Gastrocnemius medialis (tissue), 4 donors: ENCODE measurements at regions of chr17 and their contacts with region 1.

Region 1: DNA sequence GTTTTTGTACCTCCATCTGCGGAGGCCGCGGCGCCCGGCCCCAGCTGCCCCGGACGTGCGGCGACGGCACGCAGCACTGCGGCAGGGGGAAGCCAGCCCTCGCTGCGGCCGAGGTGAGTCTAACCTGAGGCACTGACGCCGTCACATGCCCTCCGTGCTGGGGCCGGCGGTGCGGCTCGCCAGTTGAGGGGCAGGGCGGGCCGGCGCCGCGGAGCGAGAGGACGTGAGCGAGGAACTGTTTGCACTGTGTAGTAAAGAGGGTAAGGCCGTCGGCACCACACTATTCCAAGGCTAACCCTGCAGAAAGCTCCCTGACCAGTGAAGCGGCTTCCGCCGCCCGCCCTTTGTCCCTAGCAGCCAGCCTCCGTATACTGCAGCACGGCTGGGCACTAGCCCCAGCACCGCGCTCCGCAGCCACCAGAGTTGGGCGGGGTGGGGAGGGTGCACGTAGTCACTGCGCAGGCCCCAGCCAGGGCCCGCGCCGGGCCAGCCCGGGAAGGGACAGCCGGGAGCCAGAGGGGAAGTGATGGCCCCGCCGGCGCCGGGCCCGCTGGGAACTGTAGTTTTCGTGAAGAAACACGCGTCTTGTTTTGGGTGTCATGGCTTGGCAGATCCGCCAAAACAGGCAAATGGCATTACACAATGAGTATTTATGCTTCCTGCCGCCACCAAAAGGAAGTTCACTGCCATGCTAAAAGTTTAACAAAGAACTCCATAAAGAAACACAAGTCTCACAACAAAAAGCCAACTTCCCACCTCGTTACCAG is 580 bp upstream of the KANSL1 start:
- DNase-seq: peak; percentile 96 to 98
- ATAC-seq: peak; percentile 74 to 75
- H3K4me3 ChIP-seq: peak overlapping the region; percentile 80 to 97 (median 94)
- H3K27ac ChIP-seq: peak overlapping the region; percentile 91 to 99 (median 98)
- H3K4me1 ChIP-seq: peaks cover 38 to 39% of the 10 kb centered on the region in 2 donors
- H3K27me3 ChIP-seq: no peaks in the 10 kb centered on the region
- CTCF ChIP-seq: peak; percentile 25 to 91 (median 60)
- POLR2A ChIP-seq: peak; percentile 85 to 93

Region 2: DNA sequence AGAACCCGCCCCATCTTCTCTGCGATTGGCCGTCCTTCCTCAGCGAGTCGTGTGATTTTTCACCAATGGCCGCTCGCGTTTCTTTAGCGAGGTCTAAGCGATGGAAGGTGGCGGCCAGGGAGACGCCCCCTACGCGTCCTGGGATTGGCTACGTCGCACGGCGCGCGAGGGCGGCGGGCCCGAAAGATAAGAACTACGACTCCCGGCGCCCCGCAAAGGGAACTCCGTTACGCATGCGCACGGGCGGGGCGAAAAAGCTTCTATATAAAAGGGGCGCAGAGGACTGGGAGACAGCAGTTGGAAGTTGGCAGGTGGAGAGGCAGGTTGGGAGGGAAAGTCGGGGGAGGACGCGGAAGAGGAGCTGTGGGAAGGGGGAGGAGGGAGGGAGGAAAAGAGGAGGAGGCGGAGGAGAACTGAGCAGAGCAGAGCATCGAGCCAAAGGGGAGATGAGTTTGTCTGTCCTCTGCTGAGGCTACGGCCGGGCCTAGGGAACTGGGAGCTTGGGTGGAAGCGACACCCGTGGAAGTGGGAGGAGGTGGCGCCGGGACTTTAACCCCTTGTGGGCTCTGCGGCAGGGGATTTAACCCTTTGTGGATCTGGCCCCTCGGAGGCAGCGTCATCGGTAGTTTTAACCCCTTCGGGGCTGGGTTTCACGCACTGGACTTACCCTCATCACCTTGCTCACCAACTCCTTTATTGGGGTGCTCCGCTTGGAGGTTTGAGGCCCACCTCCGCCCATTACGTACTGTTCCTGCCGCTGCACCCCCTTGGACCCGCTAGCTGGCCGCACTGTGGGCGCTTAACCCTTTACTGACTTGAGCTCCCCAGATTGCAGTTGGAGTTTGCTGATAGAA is 1045.4 kb before region 1 on chr17 and contains the start of gene HEXIM1:
- in situ Hi-C with region 1: no loop called
- intact Hi-C with region 1: loop called (anchors 5 kb)
- DNase-seq: peak; percentile 99 to 100
- ATAC-seq: peak; percentile 70
- H3K4me3 ChIP-seq: peak within 1 kb of the TSS; percentile 80 to 88 (median 84)
- H3K27ac ChIP-seq: peak within 1 kb of the TSS; percentile 90 to 98 (median 98)
- H3K4me1 ChIP-seq: peaks cover 36 to 50% of the 10 kb centered on the region in 2 donors
- H3K27me3 ChIP-seq: no peaks in the 10 kb centered on the region
- CTCF ChIP-seq: peak in 1 of 5 experiments; percentile 5
- POLR2A ChIP-seq: peak; percentile 99 to 100
- total RNA-seq, gene HEXIM1: 26.3 to 79.6 (median 36.9) TPM

Region 3: GRCh38 chr17:46002311-46002972 is 191.4 kb before region 1 on chr17:
- in situ Hi-C with region 1: no loop called
- intact Hi-C with region 1: loop called (anchors 5 kb)
- DNase-seq: peak; percentile 40 to 60
- ATAC-seq: peak; percentile 80 to 86
- H3K4me3 ChIP-seq: no peak overlapping the region
- H3K27ac ChIP-seq: peak overlapping the region in 3 of 4 donors; percentile 7 to 50 (median 8)
- H3K4me1 ChIP-seq: peaks cover 21 to 23% of the 10 kb centered on the region in 2 donors
- H3K27me3 ChIP-seq: no peaks in the 10 kb centered on the region
- CTCF ChIP-seq: peak; percentile 86 to 97 (median 96)
- POLR2A ChIP-seq: no peak

Region 4: DNA sequence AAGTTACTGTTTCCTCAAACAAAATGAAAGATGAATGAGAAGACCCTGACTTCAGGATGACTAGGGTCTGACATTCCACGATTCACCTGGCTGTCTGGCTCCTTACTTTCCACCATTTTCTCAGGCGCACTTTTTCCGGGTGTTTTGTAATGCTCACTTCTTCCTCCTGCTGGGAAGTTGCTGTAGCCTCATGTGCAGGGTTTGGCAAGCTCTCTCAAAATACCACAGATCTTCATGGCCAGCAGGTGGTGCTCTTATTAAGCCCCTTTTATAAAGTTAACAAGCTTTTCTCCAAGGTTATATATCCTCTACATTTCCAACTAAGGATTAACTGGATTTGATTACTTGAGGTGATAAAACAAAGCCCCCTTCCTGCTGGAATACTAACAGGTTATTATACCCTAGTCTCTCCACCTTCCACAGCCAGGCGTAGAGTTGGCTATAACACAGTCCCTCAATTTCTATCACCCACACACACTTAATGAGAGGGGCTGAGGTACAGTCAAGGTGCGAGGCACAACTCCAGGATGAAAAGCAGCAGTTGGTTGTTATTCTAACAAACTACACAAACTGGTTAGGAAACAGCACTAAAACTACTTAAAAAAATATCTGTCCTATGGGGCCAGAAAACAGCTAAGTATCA is 149.4 kb before region 1 on chr17:
- in situ Hi-C with region 1: loop called in 1 of 4 experiments (anchors 5 kb)
- intact Hi-C with region 1: loop called (anchors 1 kb)
- DNase-seq: peak; percentile 80 to 84
- ATAC-seq: peak; percentile 86 to 89
- H3K4me3 ChIP-seq: no peak overlapping the region
- H3K27ac ChIP-seq: peak overlapping the region; percentile 65 to 77 (median 75)
- H3K4me1 ChIP-seq: peaks cover 39 to 50% of the 10 kb centered on the region in 2 donors
- H3K27me3 ChIP-seq: no peaks in the 10 kb centered on the region
- CTCF ChIP-seq: peak; percentile 83 to 92 (median 89)
- POLR2A ChIP-seq: no peak

Region 5: DNA sequence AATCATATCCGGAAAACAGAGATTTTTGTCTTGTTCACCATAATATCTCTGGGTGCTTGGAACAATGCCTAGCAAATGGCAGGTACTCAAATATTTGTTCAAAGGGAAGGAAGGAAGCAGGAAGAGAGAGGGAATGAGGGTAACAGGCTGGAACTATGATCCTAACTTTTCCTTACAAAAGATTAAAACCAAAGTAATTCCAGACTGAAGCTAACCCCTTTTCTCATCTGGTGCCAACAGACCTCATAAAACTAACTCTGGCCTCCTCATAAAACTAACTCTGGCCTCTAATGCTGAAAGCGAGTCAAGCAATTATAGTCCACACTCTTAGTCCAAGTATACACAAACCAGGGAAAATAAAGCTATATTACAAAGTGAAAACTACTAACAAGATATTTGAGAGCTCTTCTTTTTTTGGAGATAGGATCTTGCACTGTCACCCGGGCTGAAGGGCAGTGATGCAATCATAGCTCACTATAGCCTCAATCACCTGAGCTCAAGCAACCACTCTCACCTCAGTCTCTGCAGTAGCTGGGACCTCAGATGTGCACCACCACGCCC is 85.2 kb before region 1 on chr17:
- in situ Hi-C with region 1: no loop called
- intact Hi-C with region 1: loop called (anchors 5 kb)
- DNase-seq: peak in 1 of 2 donors; percentile 54
- ATAC-seq: peak; percentile 78 to 89
- H3K4me3 ChIP-seq: no peak overlapping the region
- H3K27ac ChIP-seq: peak overlapping the region; percentile 56 to 76 (median 62)
- H3K4me1 ChIP-seq: peaks cover 59 to 65% of the 10 kb centered on the region in 2 donors
- H3K27me3 ChIP-seq: no peaks in the 10 kb centered on the region
- CTCF ChIP-seq: no peak
- POLR2A ChIP-seq: no peak

Region 6: GRCh38 chr17:46179375-46179999 is 14.3 kb before region 1 on chr17:
- in situ Hi-C with region 1: no loop called
- intact Hi-C with region 1: no loop called
- DNase-seq: no peak
- ATAC-seq: no peak
- H3K4me3 ChIP-seq: no peak overlapping the region
- H3K27ac ChIP-seq: peak overlapping the region in 1 of 4 donors; percentile 20
- H3K4me1 ChIP-seq: peaks cover 68 to 85% of the 10 kb centered on the region in 2 donors
- H3K27me3 ChIP-seq: no peaks in the 10 kb centered on the region
- CTCF ChIP-seq: no peak
- POLR2A ChIP-seq: no peak

Region 7: DNA sequence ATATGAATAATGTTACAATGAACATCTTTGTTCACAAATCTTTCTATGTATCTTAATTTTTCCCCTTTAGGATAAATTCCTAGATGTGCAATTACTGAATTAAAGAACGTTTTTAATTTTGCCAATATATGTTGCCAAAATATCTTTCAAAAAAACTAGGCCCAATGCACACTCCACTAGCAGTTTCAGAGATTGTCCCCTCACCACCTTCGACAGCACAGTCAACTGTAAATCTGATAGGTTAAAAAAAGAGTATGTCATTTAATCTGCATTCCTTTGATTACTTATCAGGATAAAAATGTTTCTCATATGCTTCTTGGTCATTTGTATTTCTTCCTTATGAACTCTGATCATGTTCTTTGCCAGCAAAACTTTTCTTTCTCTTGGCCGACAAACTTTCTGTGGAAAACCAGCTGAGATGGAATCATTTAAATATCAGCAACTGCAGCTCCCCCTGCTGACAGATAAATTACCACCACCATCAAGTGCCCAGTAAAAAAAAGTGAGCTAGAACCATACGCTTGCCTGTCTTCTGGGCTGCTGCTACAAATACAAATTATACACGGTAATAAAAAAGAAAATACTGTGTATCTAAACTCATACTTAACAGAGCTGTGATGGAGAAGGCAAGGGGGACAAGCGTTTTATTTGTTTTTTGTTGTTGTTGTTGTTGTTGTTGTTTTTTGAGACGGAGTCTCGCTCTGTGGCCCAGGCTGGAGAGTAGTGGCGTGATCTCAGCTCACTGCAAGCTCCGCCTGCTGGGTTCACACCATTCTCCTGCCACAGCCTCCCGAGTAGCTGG is 19.0 kb after region 1 on chr17:
- in situ Hi-C with region 1: no loop called
- intact Hi-C with region 1: no loop called
- DNase-seq: peak; percentile 48 to 60
- ATAC-seq: peak; percentile 87 to 92
- H3K4me3 ChIP-seq: no peak overlapping the region
- H3K27ac ChIP-seq: peak overlapping the region in 2 of 4 donors; percentile 2 to 41
- H3K4me1 ChIP-seq: peaks cover 14 to 21% of the 10 kb centered on the region in 2 donors
- H3K27me3 ChIP-seq: no peaks in the 10 kb centered on the region
- CTCF ChIP-seq: peak; percentile 75 to 86 (median 80)
- POLR2A ChIP-seq: no peak